Ovary (tissue), 10 donors: ENCODE measurements at regions of chr3 and their contacts with region 1.

Region 1: GRCh38 chr3:189744232-189744631 is 113.0 kb downstream of the TP63 start:
- DNase-seq: no peak
- H3K4me3 ChIP-seq: no peak overlapping the region
- H3K27ac ChIP-seq: no peak overlapping the region
- H3K4me1 ChIP-seq: no peaks in the 10 kb centered on the region
- H3K27me3 ChIP-seq: peaks cover 2% of the 10 kb centered on the region
- CTCF ChIP-seq: no peak
- EP300 ChIP-seq: no peak
- POLR2A ChIP-seq: no peak

Region 2: GRCh38 chr3:189537135-189537534 is 207.1 kb before region 1 on chr3:
- intact Hi-C with region 1: loop called in 1 of 4 experiments (anchors 5 kb)
- DNase-seq: no peak
- H3K4me3 ChIP-seq: no peak overlapping the region
- H3K27ac ChIP-seq: no peak overlapping the region
- H3K4me1 ChIP-seq: no peaks in the 10 kb centered on the region
- H3K27me3 ChIP-seq: no peaks in the 10 kb centered on the region
- CTCF ChIP-seq: no peak
- EP300 ChIP-seq: no peak
- POLR2A ChIP-seq: no peak

Region 3: GRCh38 chr3:190155752-190156151 is 411.5 kb after region 1 on chr3:
- intact Hi-C with region 1: no loop called
- DNase-seq: no peak
- H3K4me3 ChIP-seq: no peak overlapping the region
- H3K27ac ChIP-seq: no peak overlapping the region
- H3K4me1 ChIP-seq: peaks cover 5% of the 10 kb centered on the region
- H3K27me3 ChIP-seq: no peaks in the 10 kb centered on the region
- CTCF ChIP-seq: no peak
- EP300 ChIP-seq: no peak
- POLR2A ChIP-seq: no peak